ENCODE measurements at regions of chr4 and their contacts with region 1.

Region 1: DNA sequence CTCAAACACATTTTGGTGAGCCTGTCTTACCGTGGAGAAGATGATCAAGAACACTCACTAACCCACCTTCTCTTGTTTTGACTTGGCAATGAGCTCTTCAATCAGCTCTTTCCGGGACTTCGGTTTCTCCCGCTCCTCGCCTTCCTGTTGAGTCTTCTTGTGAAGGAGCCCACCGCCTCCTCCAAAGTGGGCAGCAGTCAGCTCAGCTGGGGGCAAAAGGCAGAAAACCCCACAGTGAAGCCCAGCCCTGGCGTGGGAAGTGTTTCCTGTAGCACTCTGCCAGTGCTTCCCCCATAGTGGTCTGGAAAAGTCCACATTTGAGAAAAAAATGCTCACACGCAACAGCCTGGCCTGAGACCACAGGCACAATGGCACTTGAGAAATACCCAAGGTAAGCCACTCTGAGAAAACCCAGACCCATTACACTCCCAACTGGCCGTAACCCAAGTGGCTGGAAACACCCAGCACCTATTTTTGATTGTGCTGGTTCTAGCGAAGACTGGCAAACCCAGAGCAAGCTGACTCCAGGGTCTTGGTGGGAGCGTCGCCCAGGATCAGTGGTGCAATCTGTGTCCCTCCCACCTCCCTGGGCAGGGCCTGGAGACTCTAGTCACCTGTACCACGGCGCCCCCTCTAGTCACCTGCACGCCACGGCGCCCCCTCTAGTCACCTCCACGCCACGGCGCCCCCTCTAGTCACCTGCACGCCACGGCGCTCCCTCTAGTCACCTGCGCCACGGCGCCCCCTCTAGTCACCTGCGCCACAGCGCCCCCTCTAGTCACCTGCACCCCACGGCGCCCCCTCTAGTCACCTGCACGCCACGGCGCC is 8.6 kb downstream of the NOP14 start:
- DNase-seq: peak; percentile 85
- H3K4me3 Mint-ChIP-seq: peak overlapping the region; percentile 39
- H3K27ac Mint-ChIP-seq: peak overlapping the region; percentile 99
- H3K4me1 Mint-ChIP-seq: peaks cover 59% of the 10 kb centered on the region
- H3K27me3 Mint-ChIP-seq: no peaks in the 10 kb centered on the region

Region 2: GRCh38 chr4:2843263-2843940 is 111.2 kb before region 1 on chr4 and contains the start of gene ADD1:
- CTCF ChIA-PET with region 1: interaction called, 3 read pairs
- intact Hi-C with region 1: loop called (anchors 2 kb)
- DNase-seq: peak; percentile 92
- H3K4me3 Mint-ChIP-seq: peak within 1 kb of the TSS; percentile 83
- H3K27ac Mint-ChIP-seq: peak within 1 kb of the TSS; percentile 91
- H3K4me1 Mint-ChIP-seq: peaks cover 58% of the 10 kb centered on the region
- H3K27me3 Mint-ChIP-seq: no peaks in the 10 kb centered on the region
- total RNA-seq, gene ADD1: 165 TPM

Region 3: GRCh38 chr4:2923141-2923551 is 31.4 kb before region 1 on chr4:
- CTCF ChIA-PET with region 1: interaction called, 3 read pairs
- intact Hi-C with region 1: loop called (anchors 1 kb)
- DNase-seq: no peak
- H3K4me3 Mint-ChIP-seq: no peak overlapping the region
- H3K27ac Mint-ChIP-seq: peak overlapping the region; percentile 51
- H3K4me1 Mint-ChIP-seq: peaks cover 40% of the 10 kb centered on the region
- H3K27me3 Mint-ChIP-seq: no peaks in the 10 kb centered on the region

Region 4: GRCh38 chr4:2934813-2935761 is 19.5 kb before region 1 on chr4:
- CTCF ChIA-PET with region 1: interaction called, 53 read pairs
- intact Hi-C with region 1: loop called (anchors 1 kb)
- DNase-seq: peak; percentile 97
- H3K4me3 Mint-ChIP-seq: peak overlapping the region; percentile 89
- H3K27ac Mint-ChIP-seq: peak overlapping the region; percentile 96
- H3K4me1 Mint-ChIP-seq: peaks cover 57% of the 10 kb centered on the region
- H3K27me3 Mint-ChIP-seq: no peaks in the 10 kb centered on the region